ENCODE measurements at regions of chr10 and their contacts with region 1.

Region 1: GRCh38 chr10:75401569-75402485 is at the start of gene ZNF503:
- DNase-seq: no peak
- ATAC-seq: peak; percentile 41
- H3K4me3 Mint-ChIP-seq: peak within 1 kb of the TSS; percentile 86
- H3K27ac Mint-ChIP-seq: no peak within 1 kb of the TSS
- H3K4me1 Mint-ChIP-seq: peaks cover 29% of the 10 kb centered on the region
- H3K27me3 Mint-ChIP-seq: peaks cover 51% of the 10 kb centered on the region
- CTCF ChIP-seq: no peak
- total RNA-seq, gene ZNF503: not detected in 2 replicates

Region 2: GRCh38 chr10:75417522-75417927 is 15.7 kb after region 1 on chr10:
- CTCF ChIA-PET with region 1: no interaction called
- POLR2A ChIA-PET with region 1: no interaction called
- intact Hi-C with region 1: no loop called
- DNase-seq: no peak
- ATAC-seq: no peak
- H3K4me3 Mint-ChIP-seq: no peak overlapping the region
- H3K27ac Mint-ChIP-seq: no peak overlapping the region
- H3K4me1 Mint-ChIP-seq: no peaks in the 10 kb centered on the region
- H3K27me3 Mint-ChIP-seq: peaks cover 26% of the 10 kb centered on the region
- CTCF ChIP-seq: no peak

Region 3: GRCh38 chr10:76547352-76547972 is 1145.6 kb after region 1 on chr10:
- CTCF ChIA-PET with region 1: no interaction called
- POLR2A ChIA-PET with region 1: no interaction called
- intact Hi-C with region 1: loop called (anchors 5 kb)
- DNase-seq: no peak
- ATAC-seq: no peak
- H3K4me3 Mint-ChIP-seq: no peak overlapping the region
- H3K27ac Mint-ChIP-seq: no peak overlapping the region
- H3K4me1 Mint-ChIP-seq: no peaks in the 10 kb centered on the region
- H3K27me3 Mint-ChIP-seq: no peaks in the 10 kb centered on the region
- CTCF ChIP-seq: peak; percentile 15

Region 4: GRCh38 chr10:77111611-77112550 is 1710.1 kb after region 1 on chr10:
- CTCF ChIA-PET with region 1: no interaction called
- POLR2A ChIA-PET with region 1: no interaction called
- intact Hi-C with region 1: loop called (anchors 5 kb)
- DNase-seq: no peak
- ATAC-seq: no peak
- H3K4me3 Mint-ChIP-seq: no peak overlapping the region
- H3K27ac Mint-ChIP-seq: no peak overlapping the region
- H3K4me1 Mint-ChIP-seq: no peaks in the 10 kb centered on the region
- H3K27me3 Mint-ChIP-seq: peaks cover 1% of the 10 kb centered on the region
- CTCF ChIP-seq: no peak

Measured in activated B cell treated with CpG ODN at 0.5 μM for 24 hours (primary cell).